H1 (cell line): ENCODE measurements at regions of chr2 and their contacts with region 1.

Region 1: GRCh38 chr2:105215586-105216192 is 25.9 kb upstream of the GPR45 start:
- DNase-seq: no peak
- H3K4me3 ChIP-seq: no peak overlapping the region
- H3K27ac ChIP-seq: no peak overlapping the region
- H3K4me1 ChIP-seq: no peaks in the 10 kb centered on the region
- H3K27me3 ChIP-seq: no peaks in the 10 kb centered on the region
- CTCF ChIP-seq: no peak
- EP300 ChIP-seq: no peak
- POLR2A ChIP-seq: no peak
- RAD21 ChIP-seq: no peak

Region 2: DNA sequence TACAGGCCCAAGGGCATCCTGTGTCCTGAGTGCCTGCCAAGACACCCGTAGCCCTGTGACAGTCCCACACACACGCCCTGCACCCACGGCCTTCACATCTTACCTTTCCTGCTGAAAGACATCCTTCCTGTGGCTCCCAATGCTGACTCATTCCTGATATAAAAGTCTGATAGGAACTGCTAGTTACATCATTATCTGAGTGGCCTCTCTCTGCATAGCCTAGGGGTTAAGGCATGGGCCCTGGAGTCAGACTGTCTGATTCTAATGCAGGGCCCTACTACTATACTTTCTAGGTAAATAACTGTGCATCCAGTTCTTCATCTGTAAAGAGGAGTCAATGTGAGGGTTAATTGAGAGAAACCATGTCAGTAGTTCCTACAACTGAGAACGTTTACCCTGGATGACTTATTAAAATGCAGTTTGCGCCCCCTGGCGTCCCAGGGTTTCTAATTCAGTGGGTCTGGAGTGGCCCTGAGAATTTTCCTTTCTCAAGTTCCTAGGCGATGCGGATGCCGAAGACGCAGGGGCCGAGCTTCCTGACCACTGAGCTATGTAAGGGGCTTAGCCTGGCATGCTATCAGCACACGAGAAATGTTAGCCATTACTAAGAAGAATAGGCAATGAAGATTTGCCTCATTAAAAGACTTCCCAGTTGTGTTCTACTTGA is 19.8 kb after region 1 on chr2:
- CTCF ChIA-PET with region 1: interaction called, 44 read pairs
- POLR2A ChIA-PET with region 1: interaction called, 4 read pairs
- DNase-seq: peak; percentile 82 to 88
- H3K4me3 ChIP-seq: no peak overlapping the region
- H3K27ac ChIP-seq: no peak overlapping the region
- H3K4me1 ChIP-seq: peaks cover 0 to 4% (median 0%) of the 10 kb centered on the region in 4 experiments; a peak in 2 of 7 replicates
- H3K27me3 ChIP-seq: no peaks in the 10 kb centered on the region; a peak in 1 of 7 replicates
- CTCF ChIP-seq: peak; percentile 57 to 84 (median 79)
- EP300 ChIP-seq: no peak
- POLR2A ChIP-seq: no peak
- RAD21 ChIP-seq: peak; percentile 79 to 86